Activated T-helper 1 cell treated with anti-CD3 and anti-CD28 coated beads, Interleukin-12 subunit alpha, Interleukin-12 subunit beta, Interleukin-2, Interleukin-4 antibody, amounts not matched to agents 30 ng/mL and 10 ng/mL and 1 ng/mL, durations not matched to agents 14 hours and 24 hours and 36 hours (primary cell): ENCODE measurements at regions of chr3 and their contacts with region 1.

Region 1: DNA sequence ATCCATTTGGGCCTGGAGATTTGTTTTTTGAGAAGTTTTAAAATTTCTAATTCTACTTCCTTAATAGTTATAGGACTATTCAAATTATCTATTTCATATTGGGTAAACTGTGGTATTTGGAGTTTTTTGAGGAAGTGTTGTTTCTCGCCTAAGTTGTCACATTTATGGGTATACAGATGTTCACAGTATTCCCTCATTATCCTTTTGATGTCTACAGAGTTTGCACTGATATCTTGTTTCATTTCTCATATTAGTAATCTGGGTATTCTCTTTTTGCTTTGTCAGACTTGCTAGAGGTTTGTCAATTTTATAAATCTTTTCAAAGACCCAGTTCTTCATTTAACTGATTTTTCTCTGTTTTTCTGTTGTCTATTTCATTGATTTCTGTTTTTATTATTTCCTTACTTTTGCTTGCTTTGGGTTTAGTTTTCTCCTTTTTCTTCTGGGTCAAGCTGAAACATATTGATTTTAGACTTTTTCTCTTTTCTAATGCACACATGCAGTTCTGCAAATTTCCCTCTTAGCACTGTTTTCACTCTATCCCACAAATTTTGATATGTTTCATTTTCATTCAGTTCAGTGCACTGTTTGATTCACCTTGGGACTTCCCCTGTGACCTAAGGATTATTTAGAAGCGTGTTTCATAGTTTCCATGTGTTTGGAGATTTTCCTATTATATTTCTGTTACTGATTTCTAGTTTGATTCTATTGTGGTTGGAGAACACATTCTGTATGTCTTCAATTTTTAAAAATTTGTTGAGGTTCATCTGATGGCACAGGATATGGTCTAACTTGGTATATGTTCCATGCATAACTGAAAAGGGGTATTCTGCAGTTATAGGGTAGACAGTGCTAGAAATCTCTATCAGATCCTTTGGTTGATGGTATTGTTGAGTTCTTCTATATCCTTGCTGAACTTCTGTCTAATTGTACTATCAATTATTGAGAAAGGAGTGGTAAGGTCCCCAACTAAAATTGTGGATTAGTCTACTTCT is 79.6 kb downstream of the SUMF1 start:
- DNase-seq: no peak
- H3K4me3 Mint-ChIP-seq: peak overlapping the region; percentile 8
- H3K27ac Mint-ChIP-seq: peak overlapping the region; percentile 88
- H3K4me1 Mint-ChIP-seq: peaks cover 52% of the 10 kb centered on the region
- H3K27me3 Mint-ChIP-seq: peaks cover 1% of the 10 kb centered on the region

Region 2: DNA sequence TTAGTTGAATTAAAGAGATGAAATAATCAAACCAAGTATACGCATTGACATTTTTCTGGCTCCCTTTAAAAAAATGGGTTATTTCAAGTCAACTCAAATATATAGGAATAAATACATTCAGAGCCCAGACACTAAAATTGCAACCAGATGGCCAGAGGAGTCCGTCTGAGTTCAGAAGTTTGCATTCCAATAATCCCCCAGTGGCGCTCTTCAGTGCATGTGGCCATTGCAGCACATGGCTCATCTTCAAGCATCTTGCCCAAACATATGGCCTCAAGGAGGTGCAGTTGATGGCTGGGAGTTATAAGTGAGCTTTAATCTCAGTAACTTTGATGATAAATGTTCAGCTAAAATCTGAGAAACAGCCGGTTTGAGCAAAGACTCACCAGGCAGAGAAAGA is 884.1 kb before region 1 on chr3:
- intact Hi-C with region 1: no loop called
- DNase-seq: no peak
- H3K4me3 Mint-ChIP-seq: no peak overlapping the region
- H3K27ac Mint-ChIP-seq: no peak overlapping the region
- H3K4me1 Mint-ChIP-seq: no peaks in the 10 kb centered on the region
- H3K27me3 Mint-ChIP-seq: no peaks in the 10 kb centered on the region

Region 3: GRCh38 chr3:4421121-4421520 is 33.6 kb after region 1 on chr3:
- intact Hi-C with region 1: loop called (anchors 1 kb)
- DNase-seq: no peak
- H3K4me3 Mint-ChIP-seq: peak overlapping the region; percentile 25
- H3K27ac Mint-ChIP-seq: peak overlapping the region; percentile 57
- H3K4me1 Mint-ChIP-seq: peaks cover 25% of the 10 kb centered on the region
- H3K27me3 Mint-ChIP-seq: no peaks in the 10 kb centered on the region

Region 4: DNA sequence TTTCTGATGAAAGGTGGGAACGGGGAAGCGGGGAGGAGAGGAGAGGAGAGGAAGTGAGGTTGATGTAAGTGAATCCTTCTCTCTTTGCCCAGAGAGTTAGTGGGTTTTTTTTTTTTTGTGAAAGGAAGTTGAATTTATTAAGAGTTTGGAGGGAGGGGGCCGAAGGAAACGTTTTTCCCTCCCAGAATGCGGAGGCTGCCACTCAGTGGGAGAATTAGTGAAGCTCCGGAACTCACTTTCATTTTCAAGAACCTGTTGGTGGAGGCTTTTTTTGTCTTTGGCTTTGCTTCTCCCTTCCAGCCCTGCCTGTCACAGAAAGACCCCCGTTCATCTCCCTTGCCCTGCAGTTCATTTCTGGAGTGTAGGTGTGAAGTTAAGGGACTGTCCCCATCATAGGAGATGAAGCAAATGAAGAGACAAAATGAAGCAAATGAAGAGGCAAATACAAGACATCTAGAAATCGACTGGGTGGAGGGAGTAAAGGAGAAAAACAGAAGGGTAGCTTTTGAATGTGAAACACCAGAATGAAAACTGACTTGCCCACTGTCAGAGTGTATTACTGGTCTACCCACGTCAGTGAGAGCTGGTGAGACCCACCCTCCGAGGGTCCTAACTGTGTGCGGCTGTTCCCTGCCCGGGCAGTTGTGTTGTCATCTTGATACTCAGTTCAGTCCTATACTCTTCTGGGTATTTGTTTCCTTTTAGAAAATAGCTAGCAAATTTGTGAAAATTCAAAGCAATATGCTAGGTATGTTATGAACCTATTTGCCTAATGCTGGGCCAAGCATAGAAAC is 197.1 kb after region 1 on chr3:
- intact Hi-C with region 1: loop called (anchors 1 kb)
- DNase-seq: no peak
- H3K4me3 Mint-ChIP-seq: peak overlapping the region; percentile 74
- H3K27ac Mint-ChIP-seq: peak overlapping the region; percentile 42
- H3K4me1 Mint-ChIP-seq: peaks cover 41% of the 10 kb centered on the region
- H3K27me3 Mint-ChIP-seq: no peaks in the 10 kb centered on the region

Region 5: DNA sequence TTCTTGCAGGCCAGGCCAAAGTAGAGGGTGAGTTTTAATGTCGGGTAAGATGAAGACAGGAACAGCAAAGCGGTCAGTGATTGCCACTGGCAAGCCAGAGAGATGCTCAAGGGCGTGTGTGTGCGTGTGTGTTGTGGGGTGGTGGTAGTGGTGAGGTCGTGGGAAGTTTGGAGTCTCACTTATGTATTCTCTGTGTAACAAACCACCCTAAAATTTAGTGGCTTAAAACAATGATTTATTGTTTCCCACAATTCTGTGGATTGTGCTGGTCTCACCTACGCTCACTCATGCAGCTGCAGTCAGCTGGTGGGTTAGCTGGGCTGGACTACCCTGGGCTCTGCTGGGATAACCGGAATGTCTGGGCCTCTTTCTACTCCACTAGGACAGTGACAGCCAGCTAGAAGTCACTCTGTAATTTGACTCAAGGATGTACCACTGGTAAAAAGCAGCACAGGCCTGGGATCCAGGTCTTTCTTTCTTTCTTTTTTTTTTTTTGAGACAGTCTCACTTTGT is 540.8 kb after region 1 on chr3:
- intact Hi-C with region 1: loop called (anchors 1 kb)
- DNase-seq: no peak
- H3K4me3 Mint-ChIP-seq: peak overlapping the region; percentile 20
- H3K27ac Mint-ChIP-seq: peak overlapping the region; percentile 79
- H3K4me1 Mint-ChIP-seq: peaks cover 60% of the 10 kb centered on the region
- H3K27me3 Mint-ChIP-seq: no peaks in the 10 kb centered on the region

Region 6: GRCh38 chr3:5187156-5187919 is 799.8 kb after region 1 on chr3 and contains the start of gene EDEM1:
- intact Hi-C with region 1: loop called (anchors 2 kb)
- DNase-seq: peak; percentile 96
- H3K4me3 Mint-ChIP-seq: peak within 1 kb of the TSS; percentile 93
- H3K27ac Mint-ChIP-seq: peak within 1 kb of the TSS; percentile 98
- H3K4me1 Mint-ChIP-seq: peaks cover 39% of the 10 kb centered on the region
- H3K27me3 Mint-ChIP-seq: no peaks in the 10 kb centered on the region
- total RNA-seq, gene EDEM1: 169 and 192 TPM in 2 replicates